Activated B cell treated with CpG ODN at 0.5 μM for 24 hours (primary cell): ENCODE measurements at regions of chr17 and their contacts with region 1.

Region 1: GRCh38 chr17:80426681-80427326 is 11.8 kb downstream of the ENDOV start:
- DNase-seq: peak; percentile 87
- ATAC-seq: peak; percentile 97
- H3K4me3 Mint-ChIP-seq: no peak overlapping the region
- H3K27ac Mint-ChIP-seq: no peak overlapping the region
- H3K4me1 Mint-ChIP-seq: peaks cover 29% of the 10 kb centered on the region
- H3K27me3 Mint-ChIP-seq: no peaks in the 10 kb centered on the region
- CTCF ChIP-seq: peak; percentile 79

Region 2: DNA sequence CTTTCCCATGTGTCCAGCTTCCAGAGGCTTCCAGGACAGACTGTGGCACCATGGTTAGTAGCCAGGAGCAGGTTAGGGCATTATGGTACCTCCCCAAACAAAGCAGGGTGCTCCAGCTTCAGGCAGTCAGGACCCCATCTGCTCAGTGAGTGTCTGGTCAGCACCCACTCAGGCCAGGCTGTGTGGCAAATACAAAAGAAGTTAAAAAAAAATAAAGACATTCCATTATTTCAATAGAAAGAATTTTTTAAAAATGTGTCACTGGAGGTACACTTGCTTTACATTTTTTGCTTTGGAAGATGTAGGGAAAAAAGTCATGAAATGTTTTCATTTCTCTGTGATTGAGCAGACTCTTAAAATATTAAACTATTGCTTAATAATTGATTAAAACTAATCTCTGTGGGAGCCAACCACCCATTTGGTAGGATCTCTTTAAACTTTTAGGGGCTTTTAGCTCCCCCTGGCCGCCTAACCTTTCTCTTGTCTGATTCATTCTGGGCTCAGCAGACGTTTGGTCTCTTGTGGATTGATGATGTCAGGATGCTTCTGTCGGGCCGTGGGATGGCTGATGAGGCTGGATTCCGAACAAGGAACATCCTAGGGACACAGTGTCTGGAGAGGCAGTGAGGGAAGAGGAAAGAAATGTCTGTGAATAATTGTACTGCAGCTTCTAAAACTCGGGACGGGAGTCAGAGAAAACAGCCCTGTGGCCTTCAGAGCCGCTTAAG is 78.0 kb after region 1 on chr17:
- CTCF ChIA-PET with region 1: no interaction called
- POLR2A ChIA-PET with region 1: no interaction called
- intact Hi-C with region 1: loop called (anchors 2 kb)
- DNase-seq: no peak
- ATAC-seq: no peak
- H3K4me3 Mint-ChIP-seq: no peak overlapping the region
- H3K27ac Mint-ChIP-seq: no peak overlapping the region
- H3K4me1 Mint-ChIP-seq: no peaks in the 10 kb centered on the region
- H3K27me3 Mint-ChIP-seq: peaks cover 12% of the 10 kb centered on the region
- CTCF ChIP-seq: no peak

Region 3: DNA sequence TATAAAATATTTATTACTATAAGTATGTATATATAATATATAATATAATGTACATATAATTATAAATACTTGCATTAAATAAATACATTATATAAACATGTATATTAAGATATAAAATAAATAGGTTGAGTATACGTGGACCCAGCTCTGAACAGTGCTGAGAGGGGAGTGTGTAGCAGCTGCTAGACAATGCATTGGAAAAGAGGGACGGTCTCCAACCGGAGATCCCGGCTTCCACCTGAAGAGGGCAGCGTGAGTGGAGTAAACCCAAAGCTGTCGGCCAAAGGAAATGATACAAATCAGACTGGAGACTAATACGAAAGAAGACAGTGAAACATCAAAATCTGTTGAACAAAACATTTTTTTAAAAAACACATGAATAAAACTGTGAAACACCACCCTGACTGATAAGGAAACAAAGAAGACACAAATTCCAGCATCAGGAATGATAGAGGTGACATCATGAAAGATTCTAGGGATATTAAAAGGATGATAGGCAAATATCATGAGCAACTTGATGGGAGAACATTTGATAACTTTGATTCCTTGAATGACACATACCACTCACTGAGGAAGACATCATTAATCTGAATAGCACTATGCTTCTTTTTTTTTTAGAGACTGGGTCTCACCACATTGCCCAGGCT is 439.5 kb after region 1 on chr17:
- CTCF ChIA-PET with region 1: interaction called, 10 read pairs
- POLR2A ChIA-PET with region 1: no interaction called
- intact Hi-C with region 1: loop called (anchors 1 kb)
- DNase-seq: peak; percentile 51
- ATAC-seq: peak; percentile 89
- H3K4me3 Mint-ChIP-seq: no peak overlapping the region
- H3K27ac Mint-ChIP-seq: no peak overlapping the region
- H3K4me1 Mint-ChIP-seq: peaks cover 18% of the 10 kb centered on the region
- H3K27me3 Mint-ChIP-seq: no peaks in the 10 kb centered on the region
- CTCF ChIP-seq: no peak

Region 4: GRCh38 chr17:80981062-80981902 is 554.5 kb after region 1 on chr17:
- CTCF ChIA-PET with region 1: interaction called, 15 read pairs
- POLR2A ChIA-PET with region 1: interaction called, 6 read pairs
- intact Hi-C with region 1: loop called (anchors 1 kb)
- DNase-seq: peak; percentile 61
- ATAC-seq: peak; percentile 74
- H3K4me3 Mint-ChIP-seq: peak overlapping the region; percentile 2
- H3K27ac Mint-ChIP-seq: no peak overlapping the region
- H3K4me1 Mint-ChIP-seq: peaks cover 7% of the 10 kb centered on the region
- H3K27me3 Mint-ChIP-seq: peaks cover 15% of the 10 kb centered on the region
- CTCF ChIP-seq: peak; percentile 19

Region 5: GRCh38 chr17:81018044-81018802 is 591.4 kb after region 1 on chr17:
- CTCF ChIA-PET with region 1: interaction called, 3 read pairs
- POLR2A ChIA-PET with region 1: no interaction called
- intact Hi-C with region 1: loop called (anchors 1 kb)
- DNase-seq: no peak
- ATAC-seq: peak; percentile 76
- H3K4me3 Mint-ChIP-seq: peak overlapping the region; percentile 82
- H3K27ac Mint-ChIP-seq: peak overlapping the region; percentile 64
- H3K4me1 Mint-ChIP-seq: peaks cover 14% of the 10 kb centered on the region
- H3K27me3 Mint-ChIP-seq: no peaks in the 10 kb centered on the region
- CTCF ChIP-seq: no peak